Lower lobe of right lung (tissue), 2 donors: ENCODE measurements at regions of chr1 and their contacts with region 1.

Region 1: GRCh38 chr1:66350001-66350547 is 183.9 kb upstream of the SGIP1 start:
- DNase-seq: peak; percentile 52
- ATAC-seq: peak; percentile 60 to 65
- H3K4me3 ChIP-seq: peak overlapping the region; percentile 9
- H3K27ac ChIP-seq: peak overlapping the region; percentile 15
- H3K4me1 ChIP-seq: peaks cover 62% of the 10 kb centered on the region
- H3K27me3 ChIP-seq: no peaks in the 10 kb centered on the region
- CTCF ChIP-seq: no peak

Region 2: GRCh38 chr1:66436378-66437145 is 86.5 kb after region 1 on chr1:
- intact Hi-C with region 1: loop called (anchors 10 kb)
- DNase-seq: no peak
- ATAC-seq: peak; percentile 45 to 47
- H3K4me3 ChIP-seq: no peak overlapping the region
- H3K27ac ChIP-seq: no peak overlapping the region
- H3K4me1 ChIP-seq: peaks cover 18% of the 10 kb centered on the region
- H3K27me3 ChIP-seq: no peaks in the 10 kb centered on the region
- CTCF ChIP-seq: peak; percentile 24